ENCODE measurements at regions of chr11 and their contacts with region 1.

Region 1: DNA sequence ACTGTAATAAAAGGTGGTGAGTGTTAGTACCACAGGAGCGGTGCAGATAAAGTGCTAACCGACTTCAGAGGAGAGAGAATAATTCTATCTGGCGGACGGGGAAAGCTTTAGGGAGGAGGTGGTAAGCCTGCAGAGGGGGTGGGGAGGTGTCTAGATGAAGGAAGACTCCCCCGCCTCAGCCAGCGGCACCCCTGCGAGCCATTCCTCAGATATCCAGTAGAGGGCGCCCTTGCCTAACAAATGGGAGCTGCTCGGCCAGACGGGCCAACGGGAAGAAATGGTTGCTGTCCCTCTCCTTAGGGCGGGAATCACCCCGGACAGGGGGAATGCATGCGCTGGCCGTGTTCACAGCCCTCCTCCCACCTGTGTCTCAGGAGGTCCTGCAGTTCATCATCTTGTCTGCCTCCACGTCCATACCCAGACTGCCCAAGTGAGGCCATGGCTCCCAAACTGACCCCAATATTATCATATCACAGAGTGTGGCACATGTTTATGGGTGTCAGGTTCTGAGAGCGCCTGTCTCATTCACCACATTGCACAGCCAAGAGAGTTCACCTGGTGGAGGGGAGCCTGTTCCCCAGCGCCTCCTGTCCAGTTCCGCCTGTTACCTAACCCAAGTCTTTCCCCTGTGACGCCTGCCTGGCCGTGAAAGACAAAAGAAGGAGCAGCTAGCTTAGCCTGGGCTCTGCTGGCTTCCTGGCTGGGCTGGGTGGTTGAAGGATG is 85.5 kb downstream of the ST3GAL4 start:
- DNase-seq: no peak
- H3K4me3 ChIP-seq: no peak overlapping the region
- CTCF ChIP-seq: peak; percentile 92

Region 2: DNA sequence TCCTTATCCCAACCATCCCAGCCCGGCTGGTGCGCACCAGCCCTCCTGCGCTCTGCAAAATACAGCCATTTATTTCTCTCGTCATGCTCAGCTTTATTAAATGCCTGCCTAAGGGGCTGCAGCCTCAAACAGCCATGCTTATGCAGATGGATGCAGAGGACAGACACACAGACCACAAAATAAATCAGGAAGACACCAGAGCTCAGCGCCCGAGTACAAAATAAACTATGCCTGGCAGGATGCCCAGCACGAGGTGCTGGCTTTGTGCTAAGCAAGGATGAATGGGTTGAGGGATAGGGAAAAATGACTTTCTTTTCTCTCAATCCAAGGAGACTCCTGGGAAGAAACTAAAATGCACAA is 300.0 kb before region 1 on chr11:
- CTCF ChIA-PET with region 1: no interaction called
- POLR2A ChIA-PET with region 1: no interaction called
- DNase-seq: no peak
- H3K4me3 ChIP-seq: no peak overlapping the region
- CTCF ChIP-seq: no peak

Region 3: GRCh38 chr11:126310228-126310991 is 130.5 kb before region 1 on chr11:
- CTCF ChIA-PET with region 1: interaction called, 22 read pairs
- POLR2A ChIA-PET with region 1: no interaction called
- DNase-seq: no peak
- H3K4me3 ChIP-seq: no peak overlapping the region
- CTCF ChIP-seq: peak; percentile 78

Region 4: GRCh38 chr11:126416542-126417090 is 24.3 kb before region 1 on chr11:
- CTCF ChIA-PET with region 1: interaction called, 16 read pairs
- POLR2A ChIA-PET with region 1: no interaction called
- DNase-seq: no peak
- H3K4me3 ChIP-seq: peak overlapping the region; percentile 55
- CTCF ChIP-seq: no peak

Region 5: GRCh38 chr11:126782810-126783209 is 341.9 kb after region 1 on chr11:
- CTCF ChIA-PET with region 1: no interaction called
- POLR2A ChIA-PET with region 1: no interaction called
- DNase-seq: no peak
- H3K4me3 ChIP-seq: no peak overlapping the region
- CTCF ChIP-seq: no peak

Region 6: DNA sequence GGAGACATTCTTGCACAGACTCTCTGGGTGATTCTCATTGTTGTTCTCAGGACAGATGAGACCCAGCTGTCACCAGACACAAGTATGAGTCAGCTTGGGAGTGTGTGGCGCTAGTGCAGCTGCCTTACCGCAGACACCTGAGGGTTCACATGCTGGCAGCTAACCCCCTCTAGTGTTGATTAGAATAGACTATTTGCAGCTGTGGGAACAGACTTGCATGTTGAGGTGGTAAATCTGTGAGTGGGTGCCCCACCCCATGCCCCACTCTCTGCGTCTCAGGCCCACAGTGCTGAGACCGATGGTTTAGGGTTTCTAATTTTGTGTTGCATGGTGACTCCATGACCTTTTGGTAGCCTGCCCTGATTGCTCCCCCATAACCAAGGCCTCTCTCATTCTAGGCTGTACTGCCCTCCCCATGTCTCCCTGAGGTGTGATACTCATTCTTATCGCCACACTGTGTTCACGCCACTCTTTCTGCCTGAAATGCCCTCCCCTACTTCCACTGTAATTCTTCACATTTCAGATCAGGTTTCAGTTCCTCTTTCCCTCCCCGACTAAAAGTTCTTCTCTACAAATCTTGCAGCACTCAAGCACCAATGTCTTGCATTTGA is 633.3 kb after region 1 on chr11:
- CTCF ChIA-PET with region 1: interaction called, 22 read pairs
- POLR2A ChIA-PET with region 1: no interaction called
- DNase-seq: peak; percentile 29
- H3K4me3 ChIP-seq: no peak overlapping the region
- CTCF ChIP-seq: peak; percentile 73

Region 7: DNA sequence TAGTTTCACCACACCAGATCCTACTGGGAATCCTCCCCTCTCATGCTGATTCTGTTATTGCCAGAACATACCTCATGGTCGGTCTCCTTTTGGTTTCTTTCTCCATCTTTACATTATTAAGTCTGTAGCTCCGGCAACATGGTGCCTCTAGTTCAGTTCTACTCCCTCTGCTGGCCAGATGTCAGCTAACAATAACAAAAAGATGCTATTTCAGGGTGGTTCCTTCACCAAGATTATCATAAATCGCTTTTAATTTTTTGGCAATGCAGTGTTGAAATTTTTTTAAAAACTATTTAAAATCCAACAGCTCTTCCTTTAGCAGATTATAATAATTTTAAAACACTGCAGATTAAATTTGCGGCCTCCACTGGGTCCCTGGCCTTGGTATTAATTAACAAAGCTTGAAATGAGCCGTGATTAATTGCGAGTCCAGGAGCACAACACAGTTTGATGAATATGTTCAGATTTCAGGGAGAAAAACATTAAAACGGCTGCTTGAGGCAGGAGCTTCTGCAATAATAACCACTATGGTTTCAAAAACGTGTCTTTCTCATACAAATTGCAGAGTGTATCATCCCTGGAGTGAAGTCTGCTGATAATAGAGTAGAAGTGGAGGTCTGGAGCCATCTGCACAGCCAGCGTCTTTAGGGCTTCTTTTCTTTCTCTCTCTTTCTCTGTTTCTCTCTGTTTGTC is 1052.5 kb after region 1 on chr11:
- CTCF ChIA-PET with region 1: interaction called, 22 read pairs
- POLR2A ChIA-PET with region 1: no interaction called
- DNase-seq: no peak
- H3K4me3 ChIP-seq: no peak overlapping the region
- CTCF ChIP-seq: peak; percentile 23

Measured in AG04449 (cell line).